Dorsolateral prefrontal cortex (tissue), 120 donors: ENCODE measurements at regions of chr3 and their contacts with region 1.

Region 1: DNA sequence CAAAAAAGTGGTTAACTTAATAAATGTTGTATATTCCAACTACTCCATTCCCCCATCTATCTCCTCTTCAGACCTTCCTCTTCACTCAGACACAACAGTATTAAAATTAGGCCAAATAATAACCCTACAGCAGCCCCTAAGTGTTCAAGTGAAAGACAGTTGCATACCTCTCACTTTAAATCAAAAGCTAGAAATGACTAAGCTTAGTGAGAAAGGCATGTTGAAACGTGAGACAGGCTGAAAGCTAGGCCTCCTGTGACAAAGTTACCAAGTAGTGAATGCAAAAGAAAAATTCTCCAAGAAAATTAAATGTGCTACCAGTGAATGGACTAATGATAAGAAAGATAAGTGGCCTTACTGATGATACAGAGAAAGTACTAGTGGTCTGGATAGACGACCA is 71.7 kb downstream of the ANKRD28 start:
- DNase-seq: no peak
- H3K4me3 ChIP-seq: no peak overlapping the region
- H3K27ac ChIP-seq: peak overlapping the region in 42 of 59 donors; percentile 0 to 77 (median 54)
- H3K27me3 ChIP-seq: no peaks in the 10 kb centered on the region
- CTCF ChIP-seq: no peak

Region 2: GRCh38 chr3:14962762-14963161 is 763.3 kb before region 1 on chr3:
- intact Hi-C with region 1: no loop called
- DNase-seq: no peak
- H3K4me3 ChIP-seq: no peak overlapping the region
- H3K27ac ChIP-seq: no peak overlapping the region
- H3K27me3 ChIP-seq: no peaks in the 10 kb centered on the region
- CTCF ChIP-seq: no peak

Region 3: DNA sequence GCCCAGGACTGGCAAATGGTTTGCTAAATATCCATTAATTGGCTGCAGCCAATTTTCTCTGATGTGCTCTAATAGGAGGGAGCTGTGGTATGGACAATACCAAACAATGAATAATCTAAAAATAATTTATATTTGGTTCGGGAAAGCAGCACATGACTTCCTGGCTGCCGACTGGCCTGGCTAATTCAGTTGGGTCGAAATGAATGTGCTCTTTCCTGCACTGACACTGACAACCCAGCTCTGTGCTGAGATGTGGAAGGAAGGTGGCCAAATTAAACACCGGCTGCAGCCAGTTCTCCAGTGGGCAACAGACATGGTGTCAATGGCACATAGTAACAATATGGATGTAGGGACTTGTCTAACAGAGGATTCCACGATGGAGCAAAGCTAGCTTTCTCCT is 183.4 kb before region 1 on chr3:
- intact Hi-C with region 1: no loop called
- DNase-seq: peak in 2 of 10 donors; percentile 7 to 20
- H3K4me3 ChIP-seq: no peak overlapping the region
- H3K27ac ChIP-seq: peak overlapping the region in 3 of 59 donors; percentile 17 to 27 (median 20)
- H3K27me3 ChIP-seq: no peaks in the 10 kb centered on the region
- CTCF ChIP-seq: no peak

Region 4: DNA sequence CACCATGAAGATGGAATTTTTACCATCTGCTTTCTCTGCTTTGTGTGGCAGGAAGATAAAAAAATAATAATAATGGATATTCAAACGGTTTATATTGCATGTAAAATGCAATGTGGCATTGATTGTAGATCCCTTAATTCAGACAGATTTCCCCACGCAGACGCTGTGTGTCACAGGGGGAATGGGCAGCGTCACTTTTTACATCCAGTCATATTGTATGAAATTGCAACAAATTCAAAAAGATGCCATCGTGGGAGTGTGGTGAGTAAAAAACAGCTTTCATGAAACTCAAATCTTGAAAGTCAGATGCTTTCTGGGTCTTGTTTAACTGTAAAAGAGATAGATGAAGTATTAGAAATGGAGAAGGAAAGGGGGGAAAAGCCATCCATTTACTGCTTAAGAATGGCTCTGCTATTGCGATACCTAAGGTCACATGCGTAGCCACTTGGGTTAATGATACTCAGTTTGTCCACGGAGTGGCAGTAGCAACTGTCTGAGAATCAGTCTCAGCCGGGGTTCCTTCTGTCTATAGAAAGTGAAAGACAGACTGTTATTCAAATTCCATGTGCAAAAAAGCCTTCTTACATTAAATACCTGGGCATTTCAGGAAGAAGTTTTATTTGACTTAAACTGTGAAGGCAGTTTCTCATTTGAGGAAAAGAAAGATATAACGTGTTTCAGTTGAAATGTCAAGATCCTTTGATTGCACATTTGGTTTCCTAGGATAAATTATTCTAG is 96.0 kb before region 1 on chr3:
- intact Hi-C with region 1: no loop called
- DNase-seq: peak in 8 of 10 donors; percentile 40 to 84 (median 62)
- H3K4me3 ChIP-seq: peak overlapping the region in 58 of 59 donors; percentile 2 to 67 (median 47)
- H3K27ac ChIP-seq: peak overlapping the region in 56 of 59 donors; percentile 40 to 97 (median 82)
- H3K27me3 ChIP-seq: no peaks in the 10 kb centered on the region
- CTCF ChIP-seq: peak; percentile 67 to 96 (median 88)

Region 5: GRCh38 chr3:15693355-15693754 is 32.7 kb before region 1 on chr3:
- intact Hi-C with region 1: loop called in 1 of 2 experiments (anchors 5 kb)
- DNase-seq: no peak
- H3K4me3 ChIP-seq: no peak overlapping the region
- H3K27ac ChIP-seq: peak overlapping the region in 23 of 59 donors; percentile 4 to 75 (median 38)
- H3K27me3 ChIP-seq: no peaks in the 10 kb centered on the region
- CTCF ChIP-seq: peak in 4 of 56 donors; percentile 10 to 30 (median 20)

Region 6: GRCh38 chr3:15845475-15845874 is 119.4 kb after region 1 on chr3:
- intact Hi-C with region 1: no loop called
- DNase-seq: no peak
- H3K4me3 ChIP-seq: no peak overlapping the region
- H3K27ac ChIP-seq: no peak overlapping the region
- H3K27me3 ChIP-seq: no peaks in the 10 kb centered on the region
- CTCF ChIP-seq: no peak